ENCODE measurements at regions of chr7 and their contacts with region 1.

Region 1: DNA sequence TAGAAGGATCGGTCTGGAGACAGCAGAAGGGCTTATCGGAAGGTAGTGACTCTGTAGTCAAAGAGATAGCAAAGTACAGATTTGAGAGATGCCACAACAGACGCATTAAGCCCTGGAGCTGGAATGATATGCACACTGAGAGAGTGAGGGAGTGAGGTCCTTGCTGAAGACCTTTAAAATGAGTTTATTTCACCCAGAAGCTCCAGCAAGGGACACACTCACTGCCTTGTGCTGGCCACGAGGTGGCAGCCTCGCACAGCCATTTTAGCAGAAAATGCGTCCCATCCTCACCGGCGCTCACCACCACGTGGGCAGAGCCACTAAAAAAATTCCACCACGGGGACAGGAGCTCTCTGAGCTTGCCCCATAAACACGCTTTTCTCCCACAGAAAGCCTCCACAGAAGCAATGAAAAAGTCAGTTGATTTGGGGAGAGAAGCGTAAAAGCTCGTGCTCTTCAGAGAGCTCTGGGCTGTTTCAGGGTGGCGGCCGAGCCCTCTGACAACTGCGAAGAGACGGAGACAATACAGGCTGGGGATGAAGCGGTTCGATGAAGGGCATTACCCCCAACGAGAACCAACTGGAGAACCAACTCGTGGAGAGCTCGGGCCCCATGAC is 163.0 kb upstream of the KLF14 start:
- DNase-seq: peak; percentile 71
- ATAC-seq: peak; percentile 7
- H3K4me3 ChIP-seq: no peak overlapping the region
- H3K27ac ChIP-seq: peak overlapping the region; percentile 92
- H3K4me1 ChIP-seq: peaks cover 94% of the 10 kb centered on the region
- H3K27me3 ChIP-seq: no peaks in the 10 kb centered on the region
- CTCF ChIP-seq: peak; percentile 74

Region 2: DNA sequence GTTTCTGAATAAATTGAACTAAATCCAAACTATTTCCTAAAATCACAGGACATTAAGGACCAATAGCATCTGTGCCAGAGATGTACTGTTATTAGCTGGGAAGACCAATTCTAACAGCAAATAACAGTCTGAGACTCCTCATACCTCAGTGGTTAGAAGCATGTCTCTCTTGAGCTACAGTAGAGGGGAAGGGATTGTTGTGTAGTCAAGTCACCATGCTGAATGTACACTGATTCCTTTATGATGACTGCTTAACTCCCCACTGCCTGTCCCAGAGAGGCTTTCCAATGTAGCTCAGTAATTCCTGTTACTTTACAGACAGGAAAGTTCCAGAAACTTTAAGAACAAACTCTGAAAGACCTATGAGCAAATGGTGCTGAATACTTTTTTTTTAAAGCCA is 391.3 kb before region 1 on chr7:
- CTCF ChIA-PET with region 1: no interaction called
- POLR2A ChIA-PET with region 1: no interaction called
- intact Hi-C with region 1: no loop called
- DNase-seq: no peak
- ATAC-seq: no peak
- H3K4me3 ChIP-seq: no peak overlapping the region
- H3K27ac ChIP-seq: no peak overlapping the region
- H3K4me1 ChIP-seq: no peaks in the 10 kb centered on the region
- H3K27me3 ChIP-seq: no peaks in the 10 kb centered on the region
- CTCF ChIP-seq: no peak

Region 3: GRCh38 chr7:130529417-130529816 is 367.6 kb before region 1 on chr7:
- CTCF ChIA-PET with region 1: no interaction called
- POLR2A ChIA-PET with region 1: no interaction called
- intact Hi-C with region 1: no loop called
- DNase-seq: no peak
- ATAC-seq: no peak
- H3K4me3 ChIP-seq: no peak overlapping the region
- H3K27ac ChIP-seq: no peak overlapping the region
- H3K4me1 ChIP-seq: no peaks in the 10 kb centered on the region
- H3K27me3 ChIP-seq: no peaks in the 10 kb centered on the region
- CTCF ChIP-seq: no peak

Region 4: GRCh38 chr7:130838738-130839137 is 58.3 kb before region 1 on chr7:
- CTCF ChIA-PET with region 1: no interaction called
- POLR2A ChIA-PET with region 1: no interaction called
- intact Hi-C with region 1: loop called (anchors 5 kb)
- DNase-seq: peak; percentile 98
- ATAC-seq: peak; percentile 89
- H3K4me3 ChIP-seq: no peak overlapping the region
- H3K27ac ChIP-seq: peak overlapping the region; percentile 85
- H3K4me1 ChIP-seq: peaks cover 30% of the 10 kb centered on the region
- H3K27me3 ChIP-seq: no peaks in the 10 kb centered on the region
- CTCF ChIP-seq: no peak

Region 5: DNA sequence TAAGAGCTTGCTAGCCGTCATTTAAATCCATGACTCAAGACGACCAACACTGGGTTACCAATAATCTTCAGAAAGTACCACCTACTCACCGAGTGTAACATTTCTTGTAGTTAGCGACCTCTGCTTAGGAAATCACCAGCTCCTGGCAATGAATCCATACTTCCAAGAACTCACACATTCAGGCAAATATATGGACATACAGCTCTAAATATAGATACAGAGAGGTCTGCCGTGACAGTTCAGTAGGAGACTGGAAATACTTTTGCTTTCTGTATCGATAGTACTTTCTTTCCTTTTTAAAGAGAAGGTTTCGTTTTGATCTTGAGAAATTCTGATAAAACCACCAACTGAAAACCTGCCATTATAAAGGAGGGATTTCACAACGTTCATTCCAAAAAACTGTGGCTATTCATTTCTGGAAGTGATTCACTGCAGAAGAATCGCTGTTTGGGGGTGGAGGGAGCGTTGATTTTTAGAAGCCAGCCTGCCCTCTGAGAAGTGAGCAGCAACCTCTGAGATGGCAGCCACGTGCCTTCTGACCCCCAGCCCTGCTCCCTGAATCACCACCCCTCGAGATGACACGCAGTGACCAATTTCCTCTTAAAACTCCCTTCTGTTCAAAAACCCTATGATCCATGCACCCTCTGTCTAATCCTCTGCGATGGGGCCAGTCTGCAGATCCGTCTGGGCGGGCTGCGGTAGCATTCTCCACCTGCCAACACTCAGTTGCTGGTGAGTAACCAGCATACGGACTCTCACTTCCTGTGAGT is 16.0 kb after region 1 on chr7:
- CTCF ChIA-PET with region 1: interaction called, 14 read pairs
- POLR2A ChIA-PET with region 1: interaction called, 6 read pairs
- intact Hi-C with region 1: no loop called
- DNase-seq: peak; percentile 96
- ATAC-seq: peak; percentile 52
- H3K4me3 ChIP-seq: peak overlapping the region; percentile 92
- H3K27ac ChIP-seq: peak overlapping the region; percentile 99
- H3K4me1 ChIP-seq: peaks cover 57% of the 10 kb centered on the region
- H3K27me3 ChIP-seq: no peaks in the 10 kb centered on the region
- CTCF ChIP-seq: no peak

Region 6: DNA sequence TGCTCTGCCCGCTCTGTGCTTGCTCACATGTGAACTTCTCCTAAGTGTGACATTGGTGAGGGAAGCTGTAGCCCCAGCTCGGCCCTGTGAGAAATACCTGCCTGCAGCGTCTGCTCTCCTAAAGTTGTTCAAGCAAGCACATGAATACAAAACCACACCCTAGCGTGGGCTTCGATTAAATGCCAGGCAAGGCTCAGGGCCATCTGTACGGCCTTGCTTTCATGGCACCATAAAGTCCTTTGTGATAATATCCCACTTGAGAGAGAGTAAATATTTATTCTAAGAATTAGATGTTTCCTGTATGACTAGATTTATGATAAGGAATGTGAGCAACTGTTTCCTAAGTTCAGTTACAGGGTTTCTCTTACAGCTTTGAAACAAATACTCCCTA is 99.8 kb after region 1 on chr7:
- CTCF ChIA-PET with region 1: no interaction called
- POLR2A ChIA-PET with region 1: no interaction called
- intact Hi-C with region 1: loop called (anchors 5 kb)
- DNase-seq: peak; percentile 87
- ATAC-seq: peak; percentile 87
- H3K4me3 ChIP-seq: peak overlapping the region; percentile 45; the same call in 1 of the 2 replicates
- H3K27ac ChIP-seq: peak overlapping the region; percentile 84
- H3K4me1 ChIP-seq: peaks cover 46% of the 10 kb centered on the region
- H3K27me3 ChIP-seq: no peaks in the 10 kb centered on the region
- CTCF ChIP-seq: no peak

Region 7: DNA sequence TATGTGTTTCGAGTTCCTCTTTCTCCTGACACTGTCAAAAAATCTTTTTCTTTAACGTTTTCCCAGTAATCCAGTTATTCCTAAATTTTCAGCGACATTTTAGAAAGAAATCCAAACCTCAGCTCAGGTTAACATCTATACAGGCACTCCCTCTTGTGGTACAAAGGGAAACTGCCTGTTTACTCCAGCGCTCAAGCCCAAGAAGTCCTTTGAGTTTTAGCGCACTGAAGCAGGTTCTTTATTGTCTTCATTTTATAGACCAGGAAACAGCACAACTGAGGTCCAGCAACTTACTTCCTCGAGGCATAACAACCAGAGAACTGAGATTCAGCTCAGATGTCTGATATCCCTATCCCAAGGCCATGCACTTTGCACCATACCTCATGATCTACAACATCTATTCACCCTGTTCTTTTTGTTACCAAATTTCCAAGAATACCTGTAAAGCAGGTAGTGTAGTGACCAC is 143.5 kb after region 1 on chr7:
- CTCF ChIA-PET with region 1: interaction called, 10 read pairs
- POLR2A ChIA-PET with region 1: no interaction called
- intact Hi-C with region 1: loop called (anchors 2 kb)
- DNase-seq: peak; percentile 79
- ATAC-seq: peak; percentile 88
- H3K4me3 ChIP-seq: no peak overlapping the region
- H3K27ac ChIP-seq: no peak overlapping the region
- H3K4me1 ChIP-seq: peaks cover 15% of the 10 kb centered on the region
- H3K27me3 ChIP-seq: no peaks in the 10 kb centered on the region
- CTCF ChIP-seq: peak; percentile 94